H1 (cell line): ENCODE measurements at regions of chr16 and their contacts with region 1.

Region 1: GRCh38 chr16:30585400-30586189 is at the start of gene ZNF785:
- DNase-seq: peak; percentile 91 to 93
- H3K4me3 ChIP-seq: peak within 1 kb of the TSS; percentile 78 to 89 (median 84)
- H3K27ac ChIP-seq: peak within 1 kb of the TSS; percentile 86
- H3K4me1 ChIP-seq: no peaks in the 10 kb centered on the region; a peak in 3 of 7 replicates
- H3K27me3 ChIP-seq: no peaks in the 10 kb centered on the region
- CTCF ChIP-seq: peak in 2 of 3 experiments; percentile 26 to 29; a peak in 3 of 4 replicates
- EP300 ChIP-seq: peak in 1 of 2 experiments; percentile 73; a peak in 1 of 3 replicates
- POLR2A ChIP-seq: peak; percentile 12 to 43; a peak in 2 of 3 replicates
- RAD21 ChIP-seq: peak; percentile 6 to 20; a peak in 3 of 4 replicates
- total RNA-seq, gene ZNF785: 12.9 and 14.8 TPM in 2 replicates

Region 2: DNA sequence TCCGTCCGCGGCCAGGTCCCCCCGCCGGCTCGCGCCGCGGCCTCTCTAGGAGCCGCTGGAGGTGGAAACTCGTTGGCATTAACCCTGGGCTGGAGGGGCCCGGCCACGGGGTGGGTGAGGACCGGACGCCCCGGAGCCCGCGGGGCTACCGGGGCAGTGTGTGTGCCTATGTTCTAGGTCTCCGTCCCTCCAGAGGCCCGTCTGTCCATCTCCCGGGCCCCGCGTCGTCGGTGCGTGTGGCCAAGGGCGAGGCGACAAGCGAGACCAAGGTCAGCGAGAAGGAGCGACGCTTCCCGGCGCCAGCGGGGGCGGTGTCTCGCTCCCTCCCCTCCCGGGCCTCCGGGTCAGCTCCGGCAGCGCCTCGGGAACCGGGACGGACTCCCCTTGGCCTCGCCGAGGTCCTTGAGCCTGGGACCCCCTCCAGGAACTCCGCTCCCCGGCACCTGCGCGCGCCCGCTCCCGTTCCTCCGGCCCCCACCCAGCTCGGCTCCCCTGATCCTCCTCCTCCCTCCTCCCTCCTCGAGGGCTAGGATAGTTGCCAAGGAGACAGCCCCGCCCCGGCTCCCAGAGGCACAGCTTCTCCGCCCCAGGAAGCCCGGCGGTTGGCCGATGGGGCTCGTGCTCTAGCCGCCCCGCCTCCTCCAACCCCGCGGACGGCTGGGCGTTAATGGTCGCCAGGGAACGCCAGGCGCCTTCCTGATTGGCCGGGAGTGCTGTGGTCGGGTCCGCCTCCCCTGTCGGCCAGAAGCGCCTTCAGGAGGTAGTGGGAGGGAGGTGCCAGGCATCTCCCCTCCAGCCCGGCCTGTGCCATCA is 58.6 kb before region 1 on chr16:
- CTCF ChIA-PET with region 1: no interaction called
- POLR2A ChIA-PET with region 1: interaction called, 12 read pairs
- DNase-seq: peak; percentile 91 to 97
- H3K4me3 ChIP-seq: peak overlapping the region; percentile 71 to 99 (median 94)
- H3K27ac ChIP-seq: peak overlapping the region; percentile 93
- H3K4me1 ChIP-seq: peaks cover 3 to 6% (median 6%) of the 10 kb centered on the region in 4 experiments; a peak in 6 of 7 replicates
- H3K27me3 ChIP-seq: no peaks in the 10 kb centered on the region
- CTCF ChIP-seq: peak in 2 of 3 experiments; percentile 19 to 25; a peak in 2 of 4 replicates
- EP300 ChIP-seq: no peak
- POLR2A ChIP-seq: peak in 1 of 2 experiments; percentile 81; a peak in 2 of 3 replicates
- RAD21 ChIP-seq: no peak; a peak in 1 of 4 replicates

Region 3: GRCh38 chr16:30571695-30572600 is 13.6 kb before region 1 on chr16 and contains the start of gene ZNF688:
- CTCF ChIA-PET with region 1: interaction called, 6 read pairs
- POLR2A ChIA-PET with region 1: interaction called, 45 read pairs
- DNase-seq: peak; percentile 90 to 91
- H3K4me3 ChIP-seq: peak within 1 kb of the TSS; percentile 78 to 89 (median 82)
- H3K27ac ChIP-seq: peak within 1 kb of the TSS; percentile 64; the same call in 1 of the 2 replicates
- H3K4me1 ChIP-seq: peaks cover 0 to 9% (median 2%) of the 10 kb centered on the region in 4 experiments; a peak in 5 of 7 replicates
- H3K27me3 ChIP-seq: no peaks in the 10 kb centered on the region
- CTCF ChIP-seq: no peak
- EP300 ChIP-seq: no peak
- POLR2A ChIP-seq: peak in 1 of 2 experiments; percentile 42
- RAD21 ChIP-seq: no peak
- total RNA-seq, gene ZNF688: 3.5 and 3.7 TPM in 2 replicates

Region 4: DNA sequence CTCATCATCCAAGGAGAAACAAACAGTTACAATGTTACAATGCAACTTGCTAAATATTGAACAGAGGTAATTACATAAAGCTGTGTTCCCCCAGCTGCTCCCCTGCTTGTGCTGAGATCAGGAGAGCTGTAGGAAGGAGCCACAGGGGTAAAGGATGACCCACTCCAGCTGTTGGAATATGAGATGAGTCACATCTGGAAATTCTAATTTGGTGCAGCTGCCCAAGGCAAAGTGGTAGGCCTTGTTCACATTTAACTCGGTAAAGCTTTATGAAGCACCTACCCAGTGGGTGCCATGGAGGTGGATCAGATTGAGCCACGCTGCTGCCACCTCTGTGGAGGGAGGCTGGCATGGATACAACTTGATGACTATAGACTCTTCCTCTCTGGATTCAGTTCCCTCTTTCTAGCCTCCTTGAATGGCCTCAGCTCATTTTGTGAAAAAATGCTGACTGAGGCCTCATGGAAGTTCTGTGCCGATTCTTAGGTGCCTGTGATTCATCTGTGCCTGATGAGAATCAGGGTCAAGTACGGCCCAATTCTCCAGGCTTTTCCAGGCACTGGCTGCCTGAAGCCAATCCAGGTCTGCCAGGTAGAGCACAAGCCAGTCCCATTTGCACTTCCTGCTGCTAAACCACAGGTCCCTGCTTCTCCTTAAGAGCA is 17.2 kb after region 1 on chr16:
- CTCF ChIA-PET with region 1: interaction called, 21 read pairs
- POLR2A ChIA-PET with region 1: interaction called, 32 read pairs
- DNase-seq: no peak
- H3K4me3 ChIP-seq: no peak overlapping the region
- H3K27ac ChIP-seq: no peak overlapping the region
- H3K4me1 ChIP-seq: no peaks in the 10 kb centered on the region
- H3K27me3 ChIP-seq: no peaks in the 10 kb centered on the region
- CTCF ChIP-seq: no peak
- EP300 ChIP-seq: no peak
- POLR2A ChIP-seq: no peak
- RAD21 ChIP-seq: no peak

Region 5: DNA sequence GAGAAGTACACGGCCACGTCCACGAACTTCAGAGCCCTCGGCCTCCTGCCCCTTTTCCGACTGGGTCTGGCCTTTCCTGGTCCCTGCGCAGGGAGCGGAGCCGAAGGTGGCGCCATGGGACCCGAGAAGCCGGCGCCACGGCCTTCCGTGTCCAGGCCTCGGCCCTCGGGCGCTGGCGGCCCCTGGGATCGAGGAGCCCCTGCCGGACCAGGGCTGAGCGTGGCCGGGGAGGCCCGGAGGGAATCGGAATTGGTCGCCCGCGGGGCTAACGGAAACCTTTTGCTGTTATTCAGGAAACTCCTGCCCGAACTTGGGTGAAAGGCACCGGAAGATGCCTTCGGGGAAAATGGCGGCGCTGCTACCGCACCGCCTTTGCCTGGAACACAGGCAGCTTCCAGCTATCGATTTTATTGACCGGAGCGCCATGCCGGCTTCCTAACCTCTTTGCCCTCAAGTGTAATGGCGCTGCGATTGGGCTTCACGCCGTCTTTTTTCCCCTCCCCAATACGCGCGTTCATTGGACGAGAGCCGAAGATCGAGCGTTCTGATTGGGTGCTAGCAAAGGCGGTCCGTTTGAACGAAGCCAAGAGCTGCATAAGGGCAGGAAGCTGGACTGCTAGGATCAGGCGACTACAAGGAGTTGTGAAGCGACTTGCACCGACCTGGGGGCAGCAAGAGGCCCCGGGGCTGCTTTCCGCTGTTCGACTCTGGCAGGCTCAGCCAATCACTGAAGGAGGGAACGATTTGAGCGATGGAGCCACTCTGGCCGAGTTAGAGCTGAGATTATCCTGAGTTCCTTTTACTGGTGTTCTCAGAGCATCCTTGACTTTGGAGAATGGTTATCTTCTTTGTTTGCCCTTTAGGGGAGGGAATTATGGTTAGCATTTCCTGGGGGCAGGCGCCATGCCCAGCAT is 24.6 kb after region 1 on chr16 and contains the start of gene ZNF689:
- CTCF ChIA-PET with region 1: interaction called, 17 read pairs
- POLR2A ChIA-PET with region 1: interaction called, 32 read pairs
- DNase-seq: peak; percentile 98 to 99
- H3K4me3 ChIP-seq: peak within 1 kb of the TSS; percentile 88 to 98 (median 92)
- H3K27ac ChIP-seq: peak within 1 kb of the TSS; percentile 95
- H3K4me1 ChIP-seq: peaks cover 0 to 3% (median 2%) of the 10 kb centered on the region in 4 experiments; a peak in 3 of 7 replicates
- H3K27me3 ChIP-seq: no peaks in the 10 kb centered on the region
- CTCF ChIP-seq: no peak
- EP300 ChIP-seq: no peak
- POLR2A ChIP-seq: peak; percentile 78 to 86
- RAD21 ChIP-seq: 0 out of 4 replicates have a peak, but pooled peaks of 1 of the 2 experiments have one; percentile 1
- total RNA-seq, gene ZNF689: 14.2 and 14.3 TPM in 2 replicates